ENCODE measurements at regions of chr1 and their contacts with region 1.

Region 1: DNA sequence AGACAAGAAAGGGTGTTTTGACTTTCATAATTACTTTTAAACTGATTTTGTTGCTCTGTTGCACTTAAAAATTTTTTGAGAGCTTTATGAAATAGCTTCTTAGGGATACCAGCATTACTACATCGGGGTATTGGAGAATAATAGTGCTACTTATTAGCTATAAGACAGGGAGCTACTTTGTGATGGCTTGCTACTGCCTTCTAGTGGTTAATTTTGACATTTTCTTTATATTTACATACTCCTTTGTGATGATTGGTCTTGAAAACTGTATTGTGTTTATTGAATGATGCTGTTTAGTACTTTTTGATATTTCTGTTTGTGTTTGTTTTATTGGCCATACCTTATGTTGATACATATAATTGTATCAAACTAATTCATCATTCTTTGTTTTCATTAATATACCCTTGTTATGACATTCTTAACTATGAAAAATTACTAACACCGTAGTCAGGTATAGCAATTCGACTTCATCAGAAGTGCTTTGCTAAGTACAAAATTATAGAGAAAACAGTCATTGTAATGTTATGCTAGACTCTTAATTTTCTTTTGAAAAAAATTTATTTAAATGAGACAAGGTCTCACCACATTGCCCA is 85.5 kb downstream of the CLIC4 start:
- DNase-seq: no peak
- ATAC-seq: peak in 1 of 2 donors; percentile 60
- H3K4me3 ChIP-seq: no peak overlapping the region
- H3K27ac ChIP-seq: no peak overlapping the region
- H3K4me1 ChIP-seq: peaks cover 0 to 25% of the 10 kb centered on the region in 2 donors
- H3K27me3 ChIP-seq: no peaks in the 10 kb centered on the region
- CTCF ChIP-seq: peak; percentile 52 to 89 (median 82)
- POLR2A ChIP-seq: no peak

Region 2: DNA sequence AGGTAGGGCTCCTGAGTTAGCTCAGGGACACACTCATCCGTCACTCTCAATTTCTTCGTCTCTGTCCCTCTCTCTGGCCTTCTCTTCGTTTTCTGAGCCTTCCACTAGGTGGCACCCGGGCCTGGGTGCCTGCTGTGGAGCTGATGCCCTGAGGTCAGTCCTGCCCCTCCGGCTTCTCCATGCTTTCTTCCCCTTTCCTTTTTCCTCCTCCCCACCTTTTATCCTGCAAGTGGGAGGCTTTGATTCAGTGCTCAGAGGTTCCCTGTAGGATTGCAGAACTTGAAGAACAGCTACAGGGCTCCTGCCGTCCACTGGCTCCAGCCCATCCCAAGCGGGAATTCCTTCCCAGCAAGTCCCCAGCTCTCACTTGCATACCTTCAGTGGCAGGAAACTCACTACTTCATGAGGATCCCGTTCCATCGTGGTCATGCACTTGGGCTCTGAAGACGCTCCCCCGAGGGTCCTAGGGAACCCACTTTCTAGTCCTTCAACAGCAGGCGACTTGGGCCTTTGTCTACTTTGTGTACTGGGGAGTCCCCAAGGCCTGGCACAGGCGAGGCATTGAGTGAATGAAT is 142.1 kb before region 1 on chr1:
- in situ Hi-C with region 1: loop called (anchors 5 kb)
- intact Hi-C with region 1: loop called (anchors 2 kb)
- DNase-seq: peak; percentile 32 to 48
- ATAC-seq: peak; percentile 63 to 78
- H3K4me3 ChIP-seq: no peak overlapping the region
- H3K27ac ChIP-seq: no peak overlapping the region
- H3K4me1 ChIP-seq: no peaks in the 10 kb centered on the region
- H3K27me3 ChIP-seq: no peaks in the 10 kb centered on the region
- CTCF ChIP-seq: peak; percentile 67 to 86 (median 82)
- POLR2A ChIP-seq: no peak

Region 3: DNA sequence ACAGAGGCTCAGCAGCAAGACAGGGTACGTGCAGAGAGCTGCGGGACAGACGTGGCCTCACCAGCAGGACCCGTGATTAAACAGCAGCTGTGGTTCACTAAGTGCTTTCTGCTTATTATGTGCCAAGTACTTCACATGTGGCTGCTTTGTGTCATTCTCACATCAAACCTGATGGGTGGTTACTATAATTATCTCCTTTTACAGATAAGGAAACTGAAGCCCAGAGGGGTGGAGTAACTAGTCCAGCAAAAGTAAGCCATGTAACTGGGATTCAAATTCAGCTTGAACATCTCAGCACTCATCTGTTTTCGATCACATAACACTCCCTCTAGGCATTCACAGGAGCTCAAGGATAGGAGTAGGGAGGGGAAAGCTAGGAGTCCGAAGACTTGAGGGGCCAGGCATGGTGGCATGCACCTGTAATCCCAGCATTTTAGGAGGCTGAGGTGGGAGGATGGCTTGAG is 136.4 kb before region 1 on chr1:
- in situ Hi-C with region 1: loop called (anchors 5 kb)
- intact Hi-C with region 1: loop called (anchors 2 kb)
- DNase-seq: no peak
- ATAC-seq: peak; percentile 44 to 70
- H3K4me3 ChIP-seq: no peak overlapping the region
- H3K27ac ChIP-seq: peak overlapping the region in 3 of 4 donors; percentile 22 to 56 (median 43)
- H3K4me1 ChIP-seq: peaks cover 0 to 11% of the 10 kb centered on the region in 2 donors
- H3K27me3 ChIP-seq: no peaks in the 10 kb centered on the region
- CTCF ChIP-seq: no peak
- POLR2A ChIP-seq: no peak

Region 4: DNA sequence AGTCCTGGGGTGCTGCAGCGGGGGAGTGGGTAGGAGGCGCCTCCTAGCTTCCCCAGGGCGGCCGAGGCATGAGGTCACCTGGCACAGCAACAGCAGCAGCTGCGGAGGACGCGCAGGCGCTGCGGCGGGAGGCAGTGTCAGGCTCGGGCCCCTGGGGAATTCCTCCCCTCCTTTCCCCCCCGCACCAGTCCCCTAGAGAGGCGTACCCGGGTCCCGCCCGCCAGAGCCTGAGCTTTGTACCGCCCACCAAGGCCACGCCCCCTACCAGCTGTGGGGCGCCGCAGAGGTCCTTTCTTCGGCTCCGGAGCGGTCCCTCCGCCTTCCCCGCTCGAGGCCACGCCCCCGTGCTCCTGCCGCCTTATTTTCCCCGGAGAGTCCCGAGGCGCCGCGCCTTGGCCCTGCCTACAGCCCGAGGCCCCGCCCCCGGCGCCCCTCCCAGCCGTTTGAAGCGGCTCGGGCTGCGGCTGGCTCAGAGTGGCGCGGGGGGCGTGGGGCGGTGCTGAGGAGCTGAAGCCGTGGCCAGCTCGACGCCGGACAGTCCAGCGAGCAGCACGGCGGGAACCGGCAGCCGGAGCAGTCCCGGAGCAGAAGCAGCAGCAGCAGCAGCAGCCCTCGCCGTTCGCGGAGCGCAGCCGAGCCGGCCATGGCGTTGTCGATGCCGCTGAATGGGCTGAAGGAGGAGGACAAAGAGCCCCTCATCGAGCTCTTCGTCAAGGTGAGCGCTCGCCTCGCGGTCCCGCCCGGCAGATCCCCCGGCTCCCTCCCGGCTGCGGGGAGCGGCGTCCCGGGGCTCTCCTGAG is 85.7 kb before region 1 on chr1 and contains the start of gene CLIC4:
- in situ Hi-C with region 1: no loop called
- intact Hi-C with region 1: loop called (anchors 2 kb)
- DNase-seq: peak; percentile 98
- ATAC-seq: peak; percentile 88 to 89
- H3K4me3 ChIP-seq: peak within 1 kb of the TSS; percentile 63 to 90 (median 68)
- H3K27ac ChIP-seq: peak within 1 kb of the TSS; percentile 78 to 89 (median 82)
- H3K4me1 ChIP-seq: no peaks in the 10 kb centered on the region
- H3K27me3 ChIP-seq: peaks cover 0 to 3% (median 0%) of the 10 kb centered on the region in 3 donors
- CTCF ChIP-seq: peak in 3 of 5 experiments; percentile 26 to 49 (median 46)
- POLR2A ChIP-seq: peak; percentile 92 to 97
- total RNA-seq, gene CLIC4: 37.3 to 74.5 (median 45.6) TPM

Region 5: GRCh38 chr1:24769656-24770651 is 60.8 kb before region 1 on chr1:
- in situ Hi-C with region 1: no loop called
- intact Hi-C with region 1: loop called (anchors 5 kb)
- DNase-seq: no peak
- ATAC-seq: peak; percentile 84 to 88
- H3K4me3 ChIP-seq: no peak overlapping the region
- H3K27ac ChIP-seq: peak overlapping the region; percentile 77 to 82 (median 78)
- H3K4me1 ChIP-seq: peaks cover 8 to 10% of the 10 kb centered on the region in 2 donors
- H3K27me3 ChIP-seq: no peaks in the 10 kb centered on the region
- CTCF ChIP-seq: no peak
- POLR2A ChIP-seq: peak; percentile 17 to 46